PC-3 (cell line): ENCODE measurements at regions of chr3 and their contacts with region 1.

Region 1: GRCh38 chr3:17946619-17947018 is 204.2 kb upstream of the TBC1D5 start:
- DNase-seq: no peak
- ATAC-seq: no peak
- H3K4me3 ChIP-seq: no peak overlapping the region
- H3K27ac ChIP-seq: no peak overlapping the region
- H3K4me1 ChIP-seq: peaks cover 16% of the 10 kb centered on the region
- H3K27me3 ChIP-seq: no peaks in the 10 kb centered on the region
- CTCF ChIP-seq: no peak

Region 2: DNA sequence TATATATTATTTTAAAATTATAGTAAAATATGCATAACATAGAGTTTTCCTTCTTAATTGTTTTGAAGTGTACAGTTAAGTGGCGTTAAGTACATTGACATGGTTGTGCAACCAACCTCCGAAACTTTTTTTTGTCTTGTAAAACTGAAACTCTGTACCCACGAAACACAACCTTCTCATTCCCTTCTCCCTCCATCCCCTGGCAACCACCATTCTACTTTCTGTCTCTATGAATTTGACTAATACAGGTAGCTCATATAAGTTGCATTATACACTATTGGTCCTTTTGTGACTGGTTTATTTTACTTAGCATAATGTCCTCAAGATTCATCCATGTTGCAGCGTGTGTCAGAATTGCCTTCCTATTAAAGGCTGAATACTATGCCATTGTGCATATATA is 299.1 kb after region 1 on chr3:
- CTCF ChIA-PET with region 1: no interaction called
- POLR2A ChIA-PET with region 1: no interaction called
- intact Hi-C with region 1: no loop called
- DNase-seq: no peak
- ATAC-seq: no peak
- H3K4me3 ChIP-seq: no peak overlapping the region
- H3K27ac ChIP-seq: no peak overlapping the region
- H3K4me1 ChIP-seq: peaks cover 12% of the 10 kb centered on the region
- H3K27me3 ChIP-seq: no peaks in the 10 kb centered on the region
- CTCF ChIP-seq: no peak

Region 3: DNA sequence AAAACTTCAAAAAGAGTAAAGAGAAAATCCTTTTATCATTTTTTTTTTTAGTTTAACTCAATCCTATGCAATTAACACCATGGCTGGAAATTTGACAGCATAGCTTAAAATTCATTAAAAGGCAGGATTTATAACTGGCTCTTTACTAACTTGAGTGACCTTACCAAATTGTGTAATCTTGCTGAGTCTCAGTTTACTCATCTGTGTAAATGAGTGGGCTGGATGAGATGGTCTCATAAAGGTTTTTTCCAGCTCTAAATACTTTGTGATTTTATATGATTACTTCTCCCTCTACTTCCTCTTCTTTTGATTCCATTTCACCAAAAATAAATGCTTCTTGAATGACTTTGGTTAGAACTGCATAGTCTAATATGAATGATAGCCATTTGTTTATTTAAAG is 713.4 kb after region 1 on chr3:
- CTCF ChIA-PET with region 1: no interaction called
- POLR2A ChIA-PET with region 1: interaction called, 10 read pairs
- intact Hi-C with region 1: no loop called
- DNase-seq: peak; percentile 69
- ATAC-seq: peak; percentile 68
- H3K4me3 ChIP-seq: peak overlapping the region; percentile 19; the same call in 1 of the 2 replicates
- H3K27ac ChIP-seq: peak overlapping the region; percentile 70
- H3K4me1 ChIP-seq: peaks cover 31% of the 10 kb centered on the region
- H3K27me3 ChIP-seq: no peaks in the 10 kb centered on the region
- CTCF ChIP-seq: no peak